GM12878 (cell line): ENCODE measurements at regions of chr1 and their contacts with region 1.

Region 1: DNA sequence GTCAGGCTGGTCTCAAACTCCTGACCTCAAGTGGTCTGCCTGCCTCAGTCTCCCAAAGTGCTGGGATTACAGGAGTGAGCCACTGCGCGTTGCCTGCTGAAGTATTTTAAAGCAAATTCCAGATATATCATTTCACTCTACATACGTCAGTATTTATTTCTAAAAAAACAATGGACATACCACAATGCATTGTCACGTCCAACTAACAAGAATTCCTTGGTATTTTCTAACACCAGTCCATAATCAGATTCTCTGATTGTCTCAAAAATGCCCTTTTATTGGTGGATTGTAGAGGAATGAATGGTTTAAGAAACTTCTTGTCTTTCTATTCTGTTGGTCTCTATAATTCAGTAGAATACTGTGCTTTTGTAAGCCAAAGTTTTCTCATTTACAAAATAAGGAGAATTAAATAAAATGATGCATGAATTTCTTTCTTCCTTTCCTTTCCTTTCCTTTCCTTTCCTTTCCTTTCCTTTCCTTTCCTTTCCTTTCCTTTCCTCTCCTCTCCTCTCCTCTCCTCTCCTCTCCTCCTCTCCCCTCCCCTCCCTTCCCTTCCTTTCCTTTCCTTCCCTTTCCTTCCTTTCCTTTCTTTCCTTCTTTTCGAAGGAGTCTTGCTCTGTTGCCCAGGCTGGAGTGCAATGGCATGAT is 55.8 kb downstream of the VPS13D start:
- DNase-seq: no peak
- ATAC-seq: no peak
- H3K4me3 ChIP-seq: no peak overlapping the region
- H3K27ac ChIP-seq: no peak overlapping the region
- H3K4me1 ChIP-seq: peaks cover 9% of the 10 kb centered on the region; the same call in 1 of the 2 replicates
- H3K27me3 ChIP-seq: no peaks in the 10 kb centered on the region
- CTCF ChIP-seq: no peak
- EP300 ChIP-seq: no peak
- POLR2A ChIP-seq: no peak
- RAD21 ChIP-seq: no peak

Region 2: DNA sequence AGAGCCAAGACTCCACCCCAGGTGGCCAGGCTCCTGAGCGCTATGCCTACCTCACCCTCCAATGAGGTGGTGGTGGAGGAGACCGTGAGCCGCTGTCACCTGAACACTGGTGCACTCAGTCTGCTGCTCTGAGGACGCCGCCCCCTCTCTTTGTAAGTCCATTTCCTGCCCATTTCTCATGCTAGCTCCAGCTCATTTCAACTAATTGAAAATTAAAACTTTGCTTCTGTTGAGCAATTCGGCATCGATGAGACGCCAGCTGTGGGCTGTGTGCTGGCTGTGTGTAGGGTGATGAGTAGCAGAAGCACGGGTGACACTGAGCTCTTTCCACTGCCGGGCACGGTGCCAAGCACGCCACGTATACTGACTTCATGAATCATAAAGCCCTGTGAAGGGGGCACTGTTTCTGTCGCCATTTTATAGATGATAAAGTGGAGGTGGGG is 107.6 kb before region 1 on chr1:
- CTCF ChIA-PET with region 1: no interaction called
- POLR2A ChIA-PET with region 1: no interaction called
- RAD21 ChIA-PET with region 1: no interaction called
- SMC1A ChIA-PET with region 1: no interaction called
- in situ Hi-C with region 1: no loop called
- intact Hi-C with region 1: no loop called
- DNase-seq: no peak
- ATAC-seq: no peak
- H3K4me3 ChIP-seq: no peak overlapping the region
- H3K27ac ChIP-seq: no peak overlapping the region
- H3K4me1 ChIP-seq: peaks cover 52% of the 10 kb centered on the region
- H3K27me3 ChIP-seq: no peaks in the 10 kb centered on the region
- CTCF ChIP-seq: no peak
- EP300 ChIP-seq: no peak
- POLR2A ChIP-seq: no peak; the same call in 1 of the 2 replicates
- RAD21 ChIP-seq: no peak

Region 3: GRCh38 chr1:12229835-12230548 is 55.6 kb before region 1 on chr1 and contains the start of gene VPS13D:
- CTCF ChIA-PET with region 1: no interaction called
- POLR2A ChIA-PET with region 1: no interaction called
- RAD21 ChIA-PET with region 1: no interaction called
- SMC1A ChIA-PET with region 1: no interaction called
- in situ Hi-C with region 1: no loop called
- intact Hi-C with region 1: no loop called
- DNase-seq: peak; percentile 5
- ATAC-seq: peak; percentile 97
- H3K4me3 ChIP-seq: peak within 1 kb of the TSS; percentile 88
- H3K27ac ChIP-seq: 0 out of 2 replicates have a peak within 1 kb of the TSS, but pooled peaks have one; percentile 14
- H3K4me1 ChIP-seq: no peaks in the 10 kb centered on the region
- H3K27me3 ChIP-seq: no peaks in the 10 kb centered on the region
- CTCF ChIP-seq: peak; percentile 89 to 98 (median 98)
- EP300 ChIP-seq: no peak
- POLR2A ChIP-seq: peak; percentile 75
- RAD21 ChIP-seq: peak; percentile 39; the same call in 1 of the 2 replicates
- polyA plus RNA-seq, gene VPS13D: 1.4 to 1.7 TPM

Region 4: GRCh38 chr1:12275369-12275768 is 10.3 kb before region 1 on chr1:
- CTCF ChIA-PET with region 1: interaction called, 3 read pairs
- POLR2A ChIA-PET with region 1: no interaction called
- RAD21 ChIA-PET with region 1: interaction called, 3 read pairs
- SMC1A ChIA-PET with region 1: interaction called, 20 read pairs
- in situ Hi-C with region 1: no loop called
- intact Hi-C with region 1: no loop called
- DNase-seq: no peak
- ATAC-seq: peak; percentile 53; the same call in 1 of the 3 replicates
- H3K4me3 ChIP-seq: no peak overlapping the region
- H3K27ac ChIP-seq: no peak overlapping the region
- H3K4me1 ChIP-seq: no peaks in the 10 kb centered on the region
- H3K27me3 ChIP-seq: no peaks in the 10 kb centered on the region
- CTCF ChIP-seq: peak; percentile 56 to 67 (median 60)
- EP300 ChIP-seq: no peak
- POLR2A ChIP-seq: no peak
- RAD21 ChIP-seq: peak; percentile 44

Region 5: DNA sequence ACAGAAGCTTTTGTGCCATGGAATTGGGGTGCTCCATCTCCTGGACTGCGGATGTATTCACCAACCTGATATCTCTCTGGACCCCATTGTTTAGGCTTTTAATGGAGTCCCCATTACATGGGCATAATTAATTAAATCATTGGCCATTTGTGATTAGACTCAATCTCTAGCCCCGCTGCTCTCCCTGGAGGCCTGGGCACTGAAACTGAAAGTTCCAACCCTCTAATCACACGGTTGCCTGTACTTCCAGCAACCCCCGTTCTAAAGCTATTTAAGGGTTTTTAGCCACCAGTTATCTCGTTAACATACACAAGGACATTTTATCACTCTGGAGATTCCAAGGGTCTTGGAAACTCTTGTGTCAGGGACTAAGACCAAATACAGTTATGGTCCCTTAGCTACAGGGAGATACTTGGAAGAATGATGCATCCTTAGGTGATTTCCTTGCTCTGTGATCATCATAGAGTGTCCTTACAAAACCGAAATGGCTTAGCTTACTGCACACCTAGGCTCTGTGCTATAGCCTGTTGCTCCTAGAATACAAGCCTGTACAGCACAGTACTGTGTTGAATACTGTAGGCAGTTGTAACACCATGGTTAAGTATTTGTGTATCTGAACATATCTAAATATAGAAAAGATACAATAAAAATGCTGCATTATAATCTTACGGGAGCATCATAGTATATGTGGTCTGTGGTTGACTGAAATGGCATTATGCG is 16.1 kb after region 1 on chr1:
- CTCF ChIA-PET with region 1: interaction called, 7 read pairs
- POLR2A ChIA-PET with region 1: no interaction called
- RAD21 ChIA-PET with region 1: no interaction called
- SMC1A ChIA-PET with region 1: interaction called, 20 read pairs
- in situ Hi-C with region 1: no loop called
- intact Hi-C with region 1: no loop called
- DNase-seq: no peak
- ATAC-seq: no peak
- H3K4me3 ChIP-seq: no peak overlapping the region
- H3K27ac ChIP-seq: no peak overlapping the region
- H3K4me1 ChIP-seq: peaks cover 4% of the 10 kb centered on the region; the same call in 1 of the 2 replicates
- H3K27me3 ChIP-seq: no peaks in the 10 kb centered on the region
- CTCF ChIP-seq: no peak
- EP300 ChIP-seq: no peak
- POLR2A ChIP-seq: no peak
- RAD21 ChIP-seq: no peak